ENCODE measurements at regions of chr11 and their contacts with region 1.

Region 1: DNA sequence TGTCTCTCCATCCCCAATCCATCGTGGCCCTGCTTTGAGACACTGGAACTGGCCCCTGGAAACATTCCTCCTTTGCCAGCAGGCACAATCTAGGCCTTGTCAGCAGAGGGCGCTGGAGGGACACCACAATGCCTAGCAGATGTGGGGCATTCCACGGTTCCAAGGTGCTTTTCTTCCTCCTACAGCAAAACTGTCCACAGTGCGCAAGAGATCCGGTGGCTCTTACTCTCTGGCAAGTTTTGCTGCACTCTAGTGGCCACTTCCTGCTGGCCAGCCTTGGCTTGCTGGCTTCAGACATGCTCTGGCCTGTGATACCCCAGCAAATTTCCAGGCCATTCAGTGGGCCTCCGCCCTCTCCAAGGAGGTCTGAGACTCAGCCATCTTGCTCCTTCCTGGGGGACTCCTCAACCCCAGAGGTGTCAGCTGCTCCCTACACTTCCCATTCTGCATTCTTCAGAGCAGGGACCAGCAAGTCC is 17.1 kb upstream of the RBM4B start:
- DNase-seq: peak; percentile 94
- H3K4me3 ChIP-seq: no peak overlapping the region
- H3K27ac ChIP-seq: no peak overlapping the region
- H3K4me1 ChIP-seq: no peaks in the 10 kb centered on the region
- H3K27me3 ChIP-seq: no peaks in the 10 kb centered on the region
- CTCF ChIP-seq: peak; percentile 97

Region 2: DNA sequence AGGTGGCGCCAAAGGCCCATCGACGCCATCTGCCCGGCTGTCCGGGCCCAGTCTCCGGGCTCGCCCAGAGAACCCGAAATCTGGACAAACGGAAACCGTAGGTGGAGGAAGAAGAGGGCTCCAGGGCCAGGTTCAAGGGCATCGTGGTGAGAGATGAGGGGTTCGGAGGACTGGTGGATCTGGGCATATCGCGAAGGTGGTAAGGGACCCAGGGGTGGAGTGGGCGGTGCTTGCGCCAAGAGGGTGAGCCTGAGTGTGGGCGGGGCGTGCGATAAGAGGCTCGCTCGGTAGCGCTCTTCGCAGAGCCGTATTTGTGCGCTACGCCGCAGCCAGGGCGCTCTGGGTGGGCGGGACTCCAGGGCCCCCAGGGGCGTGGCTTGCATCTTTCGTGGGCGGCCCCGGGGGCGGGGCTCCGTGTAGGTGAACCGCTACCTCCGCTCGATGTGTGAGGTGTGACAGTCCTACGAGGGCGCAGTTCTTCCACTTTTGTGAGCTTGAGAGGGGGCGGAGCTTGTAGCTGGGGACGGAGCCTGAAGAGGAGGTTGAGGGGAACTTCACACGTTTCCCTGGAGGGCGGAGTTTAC is 382.7 kb before region 1 on chr11:
- intact Hi-C with region 1: no loop called
- DNase-seq: peak; percentile 94
- H3K4me3 ChIP-seq: peak overlapping the region; percentile 54
- H3K27ac ChIP-seq: peak overlapping the region; percentile 89
- H3K4me1 ChIP-seq: peaks cover 5% of the 10 kb centered on the region
- H3K27me3 ChIP-seq: no peaks in the 10 kb centered on the region
- CTCF ChIP-seq: no peak

Region 3: DNA sequence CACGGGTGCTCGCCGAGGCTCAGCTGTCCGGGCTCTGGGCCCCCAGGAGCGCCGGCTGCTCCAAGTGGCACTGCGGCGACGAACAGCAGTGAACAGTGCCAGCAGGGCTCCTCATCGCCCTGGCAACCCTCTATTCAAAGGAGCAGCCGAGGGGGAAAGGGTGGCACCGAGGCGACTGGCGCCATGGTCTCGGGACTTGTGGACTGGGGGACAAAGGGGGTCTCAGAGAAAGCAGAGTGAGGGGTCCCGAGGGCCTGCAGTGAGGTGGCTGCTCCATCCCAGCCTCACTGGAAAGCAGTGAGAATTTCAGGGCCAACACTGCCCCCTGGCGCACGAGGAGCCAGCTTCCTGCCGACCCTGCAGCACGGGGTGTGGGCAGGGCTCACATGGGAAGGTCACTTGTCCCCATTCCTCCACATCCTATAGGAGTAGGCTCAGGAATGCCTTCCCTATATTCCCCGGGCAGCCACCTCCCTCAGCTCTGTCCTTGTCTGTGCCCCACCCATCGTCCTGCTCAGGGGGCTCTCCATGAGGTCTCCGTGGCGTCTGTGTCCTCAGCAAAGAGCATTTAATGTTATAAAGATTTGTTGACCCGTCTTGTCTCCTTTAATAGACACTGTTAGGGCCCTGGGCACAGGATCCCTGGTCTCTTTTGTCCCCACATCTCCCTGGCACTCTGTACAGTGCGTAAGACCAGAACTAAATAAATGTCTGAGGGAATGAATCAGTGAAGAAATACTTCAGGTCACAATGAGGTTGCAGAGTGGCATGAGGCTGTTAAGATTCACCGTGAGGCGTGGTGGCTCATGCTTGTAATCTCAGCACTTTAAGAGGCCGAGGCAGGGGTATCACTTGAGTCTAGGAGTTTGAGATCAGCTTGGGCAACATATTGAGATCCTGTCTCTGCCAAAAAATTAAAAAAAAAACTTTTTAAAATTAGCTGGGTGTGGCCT is 188.5 kb after region 1 on chr11:
- intact Hi-C with region 1: loop called (anchors 2 kb)
- DNase-seq: peak; percentile 83
- H3K4me3 ChIP-seq: no peak overlapping the region
- H3K27ac ChIP-seq: no peak overlapping the region
- H3K4me1 ChIP-seq: no peaks in the 10 kb centered on the region
- H3K27me3 ChIP-seq: no peaks in the 10 kb centered on the region
- CTCF ChIP-seq: peak; percentile 71

Measured in colonic mucosa (tissue), 4 donors.